H1 (cell line): ENCODE measurements at regions of chr5 and their contacts with region 1.

Region 1: GRCh38 chr5:171913987-171914273 is 92.5 kb downstream of the FBXW11 start:
- DNase-seq: no peak
- H3K4me3 ChIP-seq: no peak overlapping the region
- H3K27ac ChIP-seq: no peak overlapping the region
- H3K4me1 ChIP-seq: peaks cover 0 to 10% (median 8%) of the 10 kb centered on the region in 4 experiments; a peak in 5 of 7 replicates
- H3K27me3 ChIP-seq: no peaks in the 10 kb centered on the region
- CTCF ChIP-seq: no peak
- EP300 ChIP-seq: no peak
- POLR2A ChIP-seq: no peak
- RAD21 ChIP-seq: no peak

Region 2: DNA sequence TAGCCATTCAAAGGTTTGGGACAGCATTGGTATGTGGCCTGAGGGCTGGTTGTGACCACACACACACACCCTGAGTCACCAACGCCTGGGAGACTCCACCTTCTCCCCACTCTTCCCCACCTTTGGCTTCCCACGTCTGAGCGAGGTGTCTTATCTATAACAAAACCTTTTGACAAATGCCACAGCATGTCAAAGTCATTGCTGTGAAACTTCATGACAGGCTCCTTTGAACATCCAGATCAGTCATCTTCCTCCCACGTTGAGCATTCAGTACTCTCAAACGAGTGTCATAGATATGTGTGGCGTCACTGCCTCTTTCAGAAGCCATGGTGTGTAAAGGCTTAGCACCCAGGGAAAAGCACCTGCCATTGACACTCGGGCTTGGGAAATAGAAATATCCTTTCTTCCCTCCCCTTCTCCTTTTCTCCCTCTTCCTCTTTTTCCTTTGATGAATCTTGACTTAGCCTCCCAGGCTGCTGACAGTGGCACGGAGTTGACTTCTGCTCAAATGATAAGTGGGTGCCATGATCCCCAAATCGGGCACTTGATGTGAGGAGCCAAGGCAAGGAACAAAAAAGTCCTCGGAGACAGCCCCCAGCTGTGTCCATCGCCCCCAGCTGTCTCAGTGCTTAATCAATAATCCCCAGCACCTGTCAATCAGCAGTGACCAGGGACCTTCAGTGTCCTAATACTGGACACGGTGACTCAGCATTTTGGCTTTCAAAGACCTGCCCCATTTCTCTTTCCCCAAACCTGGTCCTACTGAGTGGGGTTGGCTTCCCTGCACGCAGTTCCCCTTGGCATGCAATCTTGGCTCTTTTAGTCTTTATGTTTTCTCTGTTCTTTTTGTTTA is 379.7 kb before region 1 on chr5:
- CTCF ChIA-PET with region 1: no interaction called
- POLR2A ChIA-PET with region 1: no interaction called
- DNase-seq: no peak
- H3K4me3 ChIP-seq: no peak overlapping the region
- H3K27ac ChIP-seq: no peak overlapping the region
- H3K4me1 ChIP-seq: peaks cover 2 to 11% (median 8%) of the 10 kb centered on the region in 4 experiments; a peak in 4 of 7 replicates
- H3K27me3 ChIP-seq: peaks cover 0 to 2% (median 0%) of the 10 kb centered on the region in 4 experiments; a peak in 1 of 7 replicates
- CTCF ChIP-seq: no peak
- EP300 ChIP-seq: no peak
- POLR2A ChIP-seq: no peak
- RAD21 ChIP-seq: no peak

Region 3: DNA sequence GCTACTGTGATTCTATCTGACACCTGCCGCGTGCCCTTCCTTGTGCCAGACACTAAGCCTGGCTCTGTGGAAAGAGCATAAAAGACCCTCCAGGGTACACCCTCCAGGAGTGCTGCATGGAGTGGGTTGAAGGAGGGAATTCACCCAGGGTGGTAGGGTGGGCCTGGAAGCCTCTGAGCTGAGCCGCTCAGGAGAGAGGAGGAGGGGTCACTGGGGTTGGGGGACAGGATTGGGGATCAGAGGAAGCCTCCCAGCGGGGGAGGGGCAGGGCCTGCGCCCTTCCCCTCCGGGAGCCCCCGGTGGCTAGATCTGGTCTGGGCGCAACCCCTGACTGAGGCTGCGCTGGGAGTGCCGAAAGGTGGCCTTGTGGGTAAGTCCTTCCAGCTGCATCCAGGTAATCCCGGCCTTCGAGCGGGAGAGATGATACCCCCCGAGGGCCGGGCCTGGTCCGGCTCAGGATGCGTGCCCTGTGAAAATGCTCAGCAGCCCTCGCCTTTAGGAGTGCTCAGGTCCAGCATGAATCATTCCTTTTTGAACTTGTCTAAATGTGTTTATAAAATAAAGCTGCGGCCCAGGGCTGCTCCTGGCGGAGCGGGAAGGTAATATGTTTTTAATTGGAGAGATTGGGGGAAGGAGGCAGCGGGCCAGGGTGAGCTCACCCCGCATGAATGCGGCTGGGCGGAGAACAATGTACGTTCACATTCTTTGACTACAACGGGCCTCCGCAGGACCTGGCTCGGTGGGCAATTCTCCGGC is 246.4 kb before region 1 on chr5:
- CTCF ChIA-PET with region 1: no interaction called
- POLR2A ChIA-PET with region 1: no interaction called
- DNase-seq: peak; percentile 56 to 82
- H3K4me3 ChIP-seq: peak overlapping the region in 1 of 4 experiments; percentile 46; a peak in 2 of 8 replicates
- H3K27ac ChIP-seq: no peak overlapping the region
- H3K4me1 ChIP-seq: peaks cover 0 to 12% (median 6%) of the 10 kb centered on the region in 4 experiments; a peak in 6 of 7 replicates
- H3K27me3 ChIP-seq: peaks cover 0 to 2% (median 0%) of the 10 kb centered on the region in 4 experiments; a peak in 3 of 7 replicates
- CTCF ChIP-seq: no peak
- EP300 ChIP-seq: no peak
- POLR2A ChIP-seq: no peak
- RAD21 ChIP-seq: no peak

Region 4: DNA sequence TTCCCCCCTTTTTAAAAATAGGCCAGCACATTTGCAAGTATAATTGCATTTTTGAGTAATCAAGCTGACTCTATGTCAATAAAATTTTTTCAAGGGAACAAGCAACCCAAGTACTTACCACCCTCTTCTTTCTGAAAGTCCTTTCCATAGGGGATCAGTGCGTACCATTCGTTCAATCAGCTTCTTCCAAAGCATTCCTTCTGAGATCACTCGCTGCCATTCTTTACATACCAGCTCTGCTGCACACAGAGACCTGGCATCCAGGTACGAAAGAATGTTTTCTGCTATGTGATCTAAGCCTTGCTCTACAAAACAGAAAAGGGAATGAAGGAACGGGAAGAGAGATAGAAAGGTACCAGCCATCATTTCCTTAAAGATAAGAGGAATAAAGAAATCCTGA is 14.1 kb before region 1 on chr5:
- CTCF ChIA-PET with region 1: interaction called, 14 read pairs
- POLR2A ChIA-PET with region 1: interaction called, 5 read pairs
- DNase-seq: no peak
- H3K4me3 ChIP-seq: no peak overlapping the region
- H3K27ac ChIP-seq: no peak overlapping the region
- H3K4me1 ChIP-seq: peaks cover 0 to 4% (median 2%) of the 10 kb centered on the region in 4 experiments; a peak in 1 of 7 replicates
- H3K27me3 ChIP-seq: no peaks in the 10 kb centered on the region
- CTCF ChIP-seq: no peak
- EP300 ChIP-seq: no peak
- POLR2A ChIP-seq: no peak
- RAD21 ChIP-seq: no peak

Region 5: GRCh38 chr5:171961117-171961516 is 47.2 kb after region 1 on chr5:
- CTCF ChIA-PET with region 1: interaction called, 10 read pairs
- POLR2A ChIA-PET with region 1: interaction called, 3 read pairs
- DNase-seq: no peak
- H3K4me3 ChIP-seq: no peak overlapping the region
- H3K27ac ChIP-seq: no peak overlapping the region
- H3K4me1 ChIP-seq: peaks cover 5 to 21% (median 9%) of the 10 kb centered on the region in 4 experiments; a peak in 5 of 7 replicates
- H3K27me3 ChIP-seq: no peaks in the 10 kb centered on the region
- CTCF ChIP-seq: no peak
- EP300 ChIP-seq: no peak
- POLR2A ChIP-seq: no peak
- RAD21 ChIP-seq: no peak

Region 6: DNA sequence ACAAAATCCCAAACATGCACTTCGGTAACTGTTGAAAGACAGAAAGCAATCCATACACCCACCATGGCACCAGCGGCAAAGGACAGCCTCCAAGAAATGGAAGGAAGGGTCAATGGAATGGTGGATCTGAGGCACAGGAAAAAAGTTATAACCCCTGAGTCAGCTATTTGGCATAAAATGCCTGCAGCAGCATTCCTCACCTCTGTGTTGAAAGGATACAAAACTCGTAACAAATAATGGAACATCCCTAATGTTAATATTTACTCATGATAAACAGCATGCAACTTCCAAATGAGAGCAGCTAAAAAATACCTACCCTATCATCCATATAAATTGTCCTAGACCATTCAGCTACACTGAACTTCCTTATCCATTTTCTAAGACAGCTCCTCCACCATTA is 83.1 kb after region 1 on chr5:
- CTCF ChIA-PET with region 1: interaction called, 11 read pairs
- POLR2A ChIA-PET with region 1: no interaction called
- DNase-seq: no peak
- H3K4me3 ChIP-seq: peak overlapping the region in 1 of 4 experiments; percentile 13; a peak in 1 of 8 replicates
- H3K27ac ChIP-seq: no peak overlapping the region
- H3K4me1 ChIP-seq: peaks cover 5 to 41% (median 23%) of the 10 kb centered on the region in 4 experiments; a peak in 5 of 7 replicates
- H3K27me3 ChIP-seq: no peaks in the 10 kb centered on the region
- CTCF ChIP-seq: no peak
- EP300 ChIP-seq: no peak
- POLR2A ChIP-seq: no peak
- RAD21 ChIP-seq: no peak

Region 7: DNA sequence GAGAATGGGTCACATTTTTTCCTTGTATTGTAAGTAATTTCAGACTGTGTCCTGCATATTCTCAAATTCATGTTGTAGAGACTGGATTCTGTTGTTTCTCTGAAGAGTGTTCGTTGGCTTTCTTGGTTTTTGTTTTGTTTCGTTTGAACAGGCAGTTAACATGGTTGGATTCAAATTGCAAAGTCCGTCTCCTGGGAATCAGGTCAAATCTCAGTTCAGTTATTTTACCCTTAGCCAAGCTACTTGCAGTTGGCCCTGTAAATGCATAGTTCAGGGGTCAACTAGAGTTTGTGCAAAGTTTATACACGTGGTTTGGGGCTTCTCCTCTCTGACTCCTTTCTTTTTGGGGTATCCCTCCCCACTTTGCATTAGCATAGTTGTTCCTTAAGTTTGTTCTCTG is 114.2 kb after region 1 on chr5:
- CTCF ChIA-PET with region 1: interaction called, 11 read pairs
- POLR2A ChIA-PET with region 1: no interaction called
- DNase-seq: no peak
- H3K4me3 ChIP-seq: no peak overlapping the region
- H3K27ac ChIP-seq: no peak overlapping the region
- H3K4me1 ChIP-seq: no peaks in the 10 kb centered on the region
- H3K27me3 ChIP-seq: no peaks in the 10 kb centered on the region
- CTCF ChIP-seq: no peak
- EP300 ChIP-seq: no peak
- POLR2A ChIP-seq: no peak
- RAD21 ChIP-seq: no peak

Region 8: GRCh38 chr5:172044631-172045314 is 130.8 kb after region 1 on chr5:
- CTCF ChIA-PET with region 1: interaction called, 83 read pairs
- POLR2A ChIA-PET with region 1: interaction called, 4 read pairs
- DNase-seq: no peak
- H3K4me3 ChIP-seq: no peak overlapping the region
- H3K27ac ChIP-seq: no peak overlapping the region
- H3K4me1 ChIP-seq: peaks cover 0 to 10% (median 0%) of the 10 kb centered on the region in 4 experiments; a peak in 5 of 7 replicates
- H3K27me3 ChIP-seq: no peaks in the 10 kb centered on the region
- CTCF ChIP-seq: peak; percentile 24 to 40 (median 31); a peak in 3 of 4 replicates
- EP300 ChIP-seq: no peak
- POLR2A ChIP-seq: no peak
- RAD21 ChIP-seq: peak; percentile 64 to 72

Region 9: DNA sequence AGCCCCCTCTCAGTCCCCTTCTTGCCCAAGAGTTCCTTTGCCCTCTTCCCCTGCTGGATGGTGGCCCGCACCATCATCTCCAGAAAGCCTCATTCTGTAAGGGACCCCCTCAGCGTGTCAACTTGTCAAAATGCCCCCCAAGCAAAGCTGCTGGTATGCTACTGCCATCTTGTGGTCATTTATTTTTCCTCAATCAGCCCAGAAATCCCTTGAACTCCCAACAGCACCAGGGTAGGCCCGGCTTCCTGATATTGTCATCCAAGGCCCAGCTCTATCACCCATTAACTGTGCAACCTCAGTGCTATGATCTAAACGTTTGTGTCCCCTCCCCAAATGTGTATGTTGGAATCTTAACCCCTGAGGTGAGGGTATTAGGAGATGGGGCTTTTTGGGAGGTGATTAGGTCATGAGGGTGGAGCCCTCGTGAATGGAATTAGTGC is 145.8 kb after region 1 on chr5:
- CTCF ChIA-PET with region 1: interaction called, 40 read pairs
- POLR2A ChIA-PET with region 1: no interaction called
- DNase-seq: peak in 1 of 2 experiments; percentile 64
- H3K4me3 ChIP-seq: no peak overlapping the region
- H3K27ac ChIP-seq: no peak overlapping the region
- H3K4me1 ChIP-seq: peaks cover 0 to 5% (median 0%) of the 10 kb centered on the region in 4 experiments; a peak in 4 of 7 replicates
- H3K27me3 ChIP-seq: no peaks in the 10 kb centered on the region
- CTCF ChIP-seq: peak; percentile 34 to 77 (median 71)
- EP300 ChIP-seq: no peak
- POLR2A ChIP-seq: no peak
- RAD21 ChIP-seq: peak; percentile 91 to 93